ENCODE measurements at regions of chr17 and their contacts with region 1.

Region 1: DNA sequence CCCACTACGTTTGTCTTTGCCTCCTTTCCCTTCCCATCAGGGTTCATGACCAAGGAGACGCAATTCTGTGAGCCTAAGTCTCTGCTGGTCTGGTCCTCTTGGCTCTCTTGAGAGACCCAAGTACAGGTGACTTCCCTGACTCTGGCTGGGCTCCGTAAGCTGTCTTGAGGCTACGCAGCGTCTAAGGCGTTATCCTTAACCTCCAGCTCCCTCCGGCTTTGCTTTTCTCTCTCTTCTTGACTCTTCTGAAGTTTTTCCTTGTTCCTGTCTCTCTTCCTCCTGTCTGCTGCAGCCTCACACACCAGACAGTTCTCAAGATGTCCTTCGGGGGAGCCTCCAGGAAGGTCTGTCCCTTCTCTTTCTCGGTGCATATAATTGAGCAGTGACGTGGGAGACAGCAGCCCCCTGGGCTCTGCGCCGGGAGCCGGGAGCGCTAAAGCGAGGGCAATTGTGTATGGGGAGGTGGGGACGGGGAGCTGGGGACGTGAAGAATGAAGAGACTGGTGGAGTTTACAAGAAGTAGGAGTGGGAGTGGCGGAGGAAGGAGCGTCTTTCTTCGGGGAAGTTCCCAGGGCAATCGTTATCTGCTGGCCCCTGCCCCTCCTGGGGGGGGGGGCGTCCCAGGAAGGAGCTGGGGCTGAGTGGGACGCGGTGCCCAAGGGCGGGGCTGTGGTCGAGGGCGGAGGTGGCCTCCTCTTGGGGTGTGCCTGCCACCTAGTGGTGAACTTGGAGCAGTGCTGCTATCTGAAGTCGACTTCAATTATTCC is 6.9 kb upstream of the PIRT start:
- DNase-seq: peak; percentile 86
- ATAC-seq: peak; percentile 94
- H3K4me3 Mint-ChIP-seq: peak overlapping the region; percentile 67
- H3K27ac Mint-ChIP-seq: peak overlapping the region; percentile 1
- H3K4me1 Mint-ChIP-seq: peaks cover 10% of the 10 kb centered on the region
- H3K27me3 Mint-ChIP-seq: no peaks in the 10 kb centered on the region

Region 2: GRCh38 chr17:10598621-10599020 is 246.2 kb before region 1 on chr17:
- CTCF ChIA-PET with region 1: no interaction called
- POLR2A ChIA-PET with region 1: no interaction called
- intact Hi-C with region 1: no loop called
- DNase-seq: no peak
- ATAC-seq: no peak
- H3K4me3 Mint-ChIP-seq: no peak overlapping the region
- H3K27ac Mint-ChIP-seq: no peak overlapping the region
- H3K4me1 Mint-ChIP-seq: no peaks in the 10 kb centered on the region
- H3K27me3 Mint-ChIP-seq: peaks cover 11% of the 10 kb centered on the region

Region 3: GRCh38 chr17:10631048-10631700 is 213.6 kb before region 1 on chr17:
- CTCF ChIA-PET with region 1: interaction called, 10 read pairs
- POLR2A ChIA-PET with region 1: no interaction called
- intact Hi-C with region 1: loop called in 1 of 2 experiments (anchors 1 kb)
- DNase-seq: peak; percentile 45
- ATAC-seq: no peak
- H3K4me3 Mint-ChIP-seq: no peak overlapping the region
- H3K27ac Mint-ChIP-seq: no peak overlapping the region
- H3K4me1 Mint-ChIP-seq: peaks cover 2% of the 10 kb centered on the region
- H3K27me3 Mint-ChIP-seq: no peaks in the 10 kb centered on the region

Region 4: GRCh38 chr17:10646392-10646990 is 198.3 kb before region 1 on chr17:
- CTCF ChIA-PET with region 1: interaction called, 16 read pairs
- POLR2A ChIA-PET with region 1: no interaction called
- intact Hi-C with region 1: loop called (anchors 1 kb)
- DNase-seq: peak; percentile 87
- ATAC-seq: peak; percentile 63
- H3K4me3 Mint-ChIP-seq: no peak overlapping the region
- H3K27ac Mint-ChIP-seq: no peak overlapping the region
- H3K4me1 Mint-ChIP-seq: no peaks in the 10 kb centered on the region
- H3K27me3 Mint-ChIP-seq: no peaks in the 10 kb centered on the region

Region 5: DNA sequence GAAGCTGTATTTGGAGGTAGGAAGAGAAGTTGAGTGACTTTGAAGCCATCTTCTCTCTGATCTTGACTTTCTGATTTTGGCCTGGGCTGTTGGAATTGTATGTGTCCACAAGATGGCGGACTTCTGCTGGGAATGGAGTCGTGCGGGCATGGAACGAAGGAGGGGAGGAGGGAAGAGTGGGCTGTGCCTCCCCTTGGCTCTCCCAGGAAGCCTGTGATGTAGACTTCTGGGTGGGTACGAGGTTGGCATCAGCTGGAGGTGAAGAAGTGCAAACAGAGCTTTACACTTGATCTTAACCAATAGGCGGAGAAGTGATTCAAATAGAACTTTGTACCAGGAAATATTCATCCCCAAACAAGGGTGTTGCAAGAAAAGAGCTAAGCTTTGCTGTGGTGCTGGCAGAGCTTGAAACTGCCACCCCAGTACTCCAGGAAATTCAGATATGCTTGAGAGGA is 107.6 kb before region 1 on chr17:
- CTCF ChIA-PET with region 1: interaction called, 19 read pairs
- POLR2A ChIA-PET with region 1: no interaction called
- intact Hi-C with region 1: loop called (anchors 1 kb)
- DNase-seq: peak; percentile 56
- ATAC-seq: peak; percentile 73
- H3K4me3 Mint-ChIP-seq: no peak overlapping the region
- H3K27ac Mint-ChIP-seq: no peak overlapping the region
- H3K4me1 Mint-ChIP-seq: peaks cover 11% of the 10 kb centered on the region
- H3K27me3 Mint-ChIP-seq: peaks cover 4% of the 10 kb centered on the region

Region 6: DNA sequence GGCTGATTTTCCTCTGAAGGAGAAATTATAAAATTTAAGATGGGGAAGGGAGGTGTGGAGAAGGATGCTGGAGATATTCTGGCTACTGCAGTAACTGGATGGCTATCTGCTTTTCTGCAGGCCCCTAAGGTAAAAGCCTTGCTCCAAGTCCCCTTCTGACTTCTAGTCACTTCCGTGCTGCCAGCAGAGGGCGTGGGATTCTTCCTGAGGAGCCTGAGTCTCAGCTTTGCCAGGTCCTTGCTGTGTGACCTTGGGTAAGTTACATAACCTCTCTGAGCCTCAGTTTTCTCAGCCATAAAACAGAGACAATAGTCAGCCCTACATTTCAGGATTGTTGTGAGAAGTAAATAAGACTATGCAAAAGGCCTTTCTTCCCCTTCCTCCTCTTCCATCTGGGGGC is 90.7 kb before region 1 on chr17:
- CTCF ChIA-PET with region 1: interaction called, 9 read pairs
- POLR2A ChIA-PET with region 1: interaction called, 3 read pairs
- intact Hi-C with region 1: loop called in 1 of 2 experiments (anchors 1 kb)
- DNase-seq: peak; percentile 60
- ATAC-seq: no peak
- H3K4me3 Mint-ChIP-seq: no peak overlapping the region
- H3K27ac Mint-ChIP-seq: no peak overlapping the region
- H3K4me1 Mint-ChIP-seq: no peaks in the 10 kb centered on the region
- H3K27me3 Mint-ChIP-seq: no peaks in the 10 kb centered on the region

Region 7: GRCh38 chr17:10772425-10773380 is 72.1 kb before region 1 on chr17:
- CTCF ChIA-PET with region 1: interaction called, 15 read pairs
- POLR2A ChIA-PET with region 1: no interaction called
- intact Hi-C with region 1: loop called (anchors 1 kb)
- DNase-seq: peak; percentile 75
- ATAC-seq: no peak
- H3K4me3 Mint-ChIP-seq: no peak overlapping the region
- H3K27ac Mint-ChIP-seq: no peak overlapping the region
- H3K4me1 Mint-ChIP-seq: no peaks in the 10 kb centered on the region
- H3K27me3 Mint-ChIP-seq: no peaks in the 10 kb centered on the region

Region 8: DNA sequence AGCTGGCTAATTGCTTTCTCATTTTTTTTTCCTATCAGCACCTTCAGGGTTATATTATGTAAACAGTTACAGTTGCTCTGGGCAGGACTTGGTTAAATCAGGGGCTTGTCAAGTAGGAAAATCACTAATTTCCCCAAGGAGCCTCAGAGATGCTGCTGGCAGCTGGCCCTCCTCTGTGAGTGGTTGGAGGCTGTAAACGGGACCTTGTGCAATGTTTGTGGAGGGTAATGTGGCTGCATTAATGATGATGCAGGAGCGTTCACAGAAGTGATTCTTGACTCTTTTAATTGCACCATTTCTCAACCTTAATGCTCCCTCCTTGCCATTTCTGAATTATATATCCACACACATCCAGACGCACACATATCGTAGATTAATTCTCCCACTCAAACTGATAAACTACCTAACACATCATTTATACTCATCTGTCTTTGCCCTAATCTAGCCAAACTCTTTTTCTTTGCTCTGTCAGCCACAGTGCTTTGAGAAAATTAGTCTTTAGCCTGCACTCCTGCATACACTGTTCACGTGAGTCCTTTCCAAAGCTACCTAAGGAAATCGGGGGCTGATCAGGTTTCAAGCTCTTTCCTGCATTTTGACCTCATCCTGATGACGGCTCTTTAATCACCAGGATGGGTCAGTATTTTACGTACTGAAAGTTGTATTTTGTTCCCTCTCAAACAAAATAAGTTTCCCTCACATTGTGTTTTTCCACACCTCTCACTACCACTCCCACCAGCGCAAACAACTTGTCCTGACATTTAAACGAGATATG is 147.5 kb after region 1 on chr17:
- CTCF ChIA-PET with region 1: no interaction called
- POLR2A ChIA-PET with region 1: no interaction called
- intact Hi-C with region 1: no loop called
- DNase-seq: no peak
- ATAC-seq: no peak
- H3K4me3 Mint-ChIP-seq: no peak overlapping the region
- H3K27ac Mint-ChIP-seq: no peak overlapping the region
- H3K4me1 Mint-ChIP-seq: no peaks in the 10 kb centered on the region
- H3K27me3 Mint-ChIP-seq: peaks cover 10% of the 10 kb centered on the region

Region 9: DNA sequence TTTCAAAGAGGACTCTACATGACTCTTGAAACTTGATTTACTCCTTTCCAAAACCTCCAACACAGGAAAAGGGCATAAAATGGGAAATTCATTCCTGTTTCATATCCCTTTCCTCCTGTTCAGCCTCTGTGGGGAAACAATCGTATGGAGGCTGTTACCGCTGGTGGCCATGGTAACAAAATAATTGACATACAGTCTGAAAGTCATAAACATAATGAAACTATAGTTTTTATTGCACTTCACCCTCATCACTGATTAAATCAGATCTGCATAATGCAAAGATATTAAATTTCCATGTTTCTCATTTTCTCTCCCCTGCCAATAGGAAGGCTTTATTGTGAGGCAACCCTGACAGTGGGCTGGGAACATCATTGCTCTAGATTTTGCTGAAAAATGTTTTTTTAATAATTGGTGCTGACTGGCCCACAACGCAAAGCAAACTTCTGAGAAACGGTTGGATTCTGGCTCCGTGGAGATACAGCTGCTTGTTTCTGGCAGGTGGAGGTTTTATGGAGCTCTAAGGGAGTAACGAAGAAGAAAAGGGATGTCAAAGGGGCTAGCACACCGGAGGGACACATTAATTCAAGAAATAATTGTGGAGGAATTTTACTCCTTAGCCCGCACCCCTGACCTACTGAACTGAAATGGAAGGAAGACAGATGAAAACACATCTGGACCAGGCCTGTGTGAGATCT is 242.0 kb after region 1 on chr17:
- CTCF ChIA-PET with region 1: no interaction called
- POLR2A ChIA-PET with region 1: no interaction called
- intact Hi-C with region 1: no loop called
- DNase-seq: no peak
- ATAC-seq: no peak
- H3K4me3 Mint-ChIP-seq: no peak overlapping the region
- H3K27ac Mint-ChIP-seq: no peak overlapping the region
- H3K4me1 Mint-ChIP-seq: no peaks in the 10 kb centered on the region
- H3K27me3 Mint-ChIP-seq: no peaks in the 10 kb centered on the region